ENCODE measurements at regions of chr12 and their contacts with region 1.

Region 1: GRCh38 chr12:62934799-62935674 is at the start of gene PPM1H:
- DNase-seq: peak; percentile 70 to 88 (median 79)
- H3K4me3 ChIP-seq: peak within 1 kb of the TSS; percentile 69 to 97 (median 88)
- H3K27ac ChIP-seq: peak within 1 kb of the TSS; percentile 87 to 99 (median 95)
- H3K27me3 ChIP-seq: no peaks in the 10 kb centered on the region
- CTCF ChIP-seq: peak in 54 of 56 donors; percentile 25 to 79 (median 58)
- total RNA-seq, gene PPM1H: 33.6 to 75.1 (median 58.9) TPM

Region 2: DNA sequence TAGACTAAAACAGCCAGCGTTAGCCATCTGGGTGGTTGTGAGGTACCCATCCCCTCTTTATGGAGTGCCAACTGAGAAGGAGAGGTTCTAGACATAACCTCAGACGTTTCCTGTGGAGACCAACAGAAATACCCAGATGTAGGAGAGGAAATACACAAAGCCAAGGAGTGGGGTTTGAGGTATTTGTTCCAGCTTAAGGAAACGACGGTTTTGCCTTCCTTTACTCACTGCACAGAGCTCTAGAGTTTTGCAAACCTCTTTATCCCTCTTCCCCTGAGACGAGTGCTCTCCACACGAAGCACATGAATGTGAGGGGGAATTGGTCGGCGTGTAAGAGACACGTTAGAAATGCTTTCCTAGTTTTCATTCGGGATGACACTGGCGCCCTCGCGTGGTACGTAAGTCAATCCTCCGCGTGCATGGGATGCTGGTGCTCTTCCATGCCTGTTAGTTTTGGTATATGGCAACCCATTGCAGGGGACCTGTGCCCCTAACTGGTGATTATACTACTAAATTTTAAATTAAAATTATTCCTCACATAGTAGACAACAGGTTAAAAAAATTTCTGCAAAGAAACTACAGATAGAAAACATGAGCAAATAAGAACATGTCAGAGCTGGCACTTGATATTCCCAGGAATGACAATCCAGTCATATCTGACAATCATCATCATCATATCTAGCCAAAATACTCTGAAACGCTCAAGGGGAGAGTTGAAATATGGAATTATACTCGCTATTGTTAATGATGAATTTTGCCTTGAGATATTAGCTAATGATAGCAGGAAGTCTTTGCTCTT is 121.8 kb before region 1 on chr12:
- intact Hi-C with region 1: loop called (anchors 1 to 2 kb)
- DNase-seq: peak; percentile 56 to 79 (median 70)
- H3K4me3 ChIP-seq: peak overlapping the region in 23 of 59 donors; percentile 4 to 45 (median 21)
- H3K27ac ChIP-seq: peak overlapping the region in 43 of 59 donors; percentile 4 to 74 (median 36)
- H3K27me3 ChIP-seq: no peaks in the 10 kb centered on the region
- CTCF ChIP-seq: peak; percentile 29 to 83 (median 70)

Region 3: DNA sequence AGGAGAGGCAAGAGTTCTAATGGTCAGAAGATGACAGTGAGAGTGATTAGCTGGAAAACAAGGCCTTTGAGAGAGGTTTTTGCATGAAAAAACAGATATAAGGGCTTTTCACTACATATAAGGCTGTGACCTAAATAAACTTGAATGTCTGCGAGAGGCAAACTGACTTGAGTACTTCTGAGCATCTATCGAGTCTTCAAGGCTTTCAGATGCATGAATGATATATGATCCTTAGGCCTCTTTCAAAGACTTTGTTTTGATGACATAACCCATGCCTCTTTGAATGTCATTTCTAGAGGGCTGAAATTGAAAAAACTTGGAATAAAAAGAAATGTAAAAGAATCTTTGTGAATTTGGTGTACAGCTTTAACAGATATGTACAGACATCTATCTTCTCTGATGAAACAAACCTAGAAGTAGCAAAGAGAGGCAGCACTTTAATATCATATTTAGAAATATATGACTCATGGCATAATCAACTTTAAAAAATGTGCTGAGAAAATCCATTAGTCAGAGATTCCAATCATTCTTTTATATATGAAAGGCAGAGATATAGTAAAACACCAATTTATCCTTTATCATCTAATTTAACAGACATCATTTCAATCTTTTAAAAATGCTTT is 72.7 kb before region 1 on chr12:
- intact Hi-C with region 1: loop called (anchors 5 kb)
- DNase-seq: no peak
- H3K4me3 ChIP-seq: no peak overlapping the region
- H3K27ac ChIP-seq: peak overlapping the region; percentile 6 to 93 (median 81)
- H3K27me3 ChIP-seq: no peaks in the 10 kb centered on the region
- CTCF ChIP-seq: no peak